Activated CD4-positive, alpha-beta T cell treated with anti-CD3 and anti-CD28 coated beads, Interleukin-2, amount 10 ng/mL, durations not matched to agents 24 days and 14 days (primary cell): ENCODE measurements at regions of chr9 and their contacts with region 1.

Region 1: GRCh38 chr9:74322661-74323314 is 174.3 kb upstream of the RORB start:
- DNase-seq: peak; percentile 67
- H3K4me3 Mint-ChIP-seq: peak overlapping the region; percentile 81
- H3K27ac Mint-ChIP-seq: peak overlapping the region; percentile 38
- H3K4me1 Mint-ChIP-seq: peaks cover 10% of the 10 kb centered on the region
- H3K27me3 Mint-ChIP-seq: peaks cover 2% of the 10 kb centered on the region

Region 2: DNA sequence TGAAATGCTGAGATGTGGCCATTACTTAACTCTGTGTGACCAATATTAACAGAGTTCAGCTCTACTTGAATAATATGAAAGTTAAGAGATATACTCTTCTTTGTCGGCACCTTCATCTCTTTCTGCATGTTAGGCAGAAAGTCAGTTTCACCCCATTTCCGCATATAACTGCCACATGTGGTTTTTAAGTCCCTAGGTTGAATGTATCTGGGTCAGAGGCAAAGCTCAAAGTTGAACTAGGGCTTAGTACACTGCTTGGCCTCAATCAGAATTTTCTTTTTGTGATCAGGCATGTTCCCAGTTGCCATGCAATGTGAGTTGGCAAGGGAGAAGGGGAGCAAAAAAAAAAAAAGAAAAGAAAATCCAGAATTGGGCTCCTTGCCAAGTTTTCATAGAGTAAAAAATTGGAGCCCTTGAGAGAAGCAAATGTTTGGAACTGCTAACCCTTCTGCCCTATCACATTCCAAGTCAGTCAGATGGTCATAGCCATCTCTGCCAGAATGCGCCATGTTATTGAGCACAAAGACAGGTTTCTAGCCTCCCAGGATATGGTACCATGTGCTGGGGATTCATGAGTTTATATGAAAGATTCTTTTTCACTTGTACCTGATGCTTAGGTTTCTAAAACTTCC is 76.8 kb before region 1 on chr9:
- intact Hi-C with region 1: loop called (anchors 10 kb)
- DNase-seq: peak; percentile 71
- H3K4me3 Mint-ChIP-seq: peak overlapping the region; percentile 27
- H3K27ac Mint-ChIP-seq: peak overlapping the region; percentile 82
- H3K4me1 Mint-ChIP-seq: peaks cover 9% of the 10 kb centered on the region
- H3K27me3 Mint-ChIP-seq: no peaks in the 10 kb centered on the region

Region 3: DNA sequence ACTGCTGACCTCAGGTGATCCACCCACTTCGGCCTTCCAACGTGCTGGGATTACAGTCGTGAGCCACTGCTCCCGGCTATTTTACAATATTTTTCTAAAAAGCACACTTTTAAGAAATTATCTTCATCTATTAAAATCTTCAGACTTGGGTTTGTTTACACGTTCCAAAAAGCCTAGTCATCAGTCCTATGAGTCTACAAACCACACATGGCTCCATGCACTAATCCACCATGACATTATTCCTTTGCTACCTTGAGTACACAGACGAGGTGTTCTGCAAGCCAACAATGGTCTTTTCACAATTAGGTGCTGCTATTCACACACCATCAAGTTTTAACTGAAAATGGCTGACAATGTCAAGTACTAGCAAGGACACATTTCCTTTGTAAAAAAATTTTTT is 524.0 kb after region 1 on chr9:
- intact Hi-C with region 1: no loop called
- DNase-seq: no peak
- H3K4me3 Mint-ChIP-seq: no peak overlapping the region
- H3K27ac Mint-ChIP-seq: no peak overlapping the region
- H3K4me1 Mint-ChIP-seq: no peaks in the 10 kb centered on the region
- H3K27me3 Mint-ChIP-seq: peaks cover 3% of the 10 kb centered on the region